CD14-positive monocyte (primary cell): ENCODE measurements at regions of chr1 and their contacts with region 1.

Region 1: GRCh38 chr1:96355521-96355920 is 366.1 kb upstream of the PTBP2 start:
- DNase-seq: no peak
- H3K4me3 ChIP-seq: no peak overlapping the region
- H3K4me3 Mint-ChIP-seq: no peak overlapping the region
- H3K27ac ChIP-seq: no peak overlapping the region
- H3K27ac Mint-ChIP-seq: no peak overlapping the region
- H3K4me1 ChIP-seq: peaks cover 2 to 9% of the 10 kb centered on the region in 2 donors
- H3K4me1 Mint-ChIP-seq: peaks cover 5% of the 10 kb centered on the region
- H3K27me3 ChIP-seq: no peaks in the 10 kb centered on the region
- H3K27me3 Mint-ChIP-seq: peaks cover under 1 to 10% (median 1%) of the 10 kb centered on the region in 3 donors
- CTCF ChIP-seq: no peak

Region 2: GRCh38 chr1:95723346-95723745 is 632.2 kb before region 1 on chr1:
- intact Hi-C with region 1: no loop called
- DNase-seq: no peak
- H3K4me3 ChIP-seq: no peak overlapping the region
- H3K4me3 Mint-ChIP-seq: no peak overlapping the region
- H3K27ac ChIP-seq: no peak overlapping the region
- H3K27ac Mint-ChIP-seq: no peak overlapping the region
- H3K4me1 ChIP-seq: no peaks in the 10 kb centered on the region
- H3K4me1 Mint-ChIP-seq: no peaks in the 10 kb centered on the region
- H3K27me3 ChIP-seq: no peaks in the 10 kb centered on the region
- H3K27me3 Mint-ChIP-seq: no peaks in the 10 kb centered on the region
- CTCF ChIP-seq: no peak

Region 3: DNA sequence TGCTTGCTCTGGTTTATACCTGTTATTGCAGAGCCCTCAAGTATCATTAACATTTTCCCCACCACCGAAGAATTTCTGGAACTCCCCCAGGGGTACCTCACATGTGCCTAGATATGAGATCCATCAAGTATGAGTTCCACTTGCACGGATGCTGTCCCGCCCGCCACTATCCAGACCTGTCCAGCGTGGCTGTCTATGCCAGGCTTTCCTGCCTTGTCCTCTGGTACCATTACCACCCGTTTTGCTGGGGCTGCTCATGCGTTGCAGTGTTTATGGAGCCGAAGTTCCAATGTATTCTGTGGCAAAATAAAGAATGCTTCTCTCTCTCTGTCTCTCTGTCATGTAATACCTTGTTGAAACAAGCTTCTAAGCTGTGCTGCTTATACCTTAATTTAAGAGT is 177.5 kb before region 1 on chr1:
- intact Hi-C with region 1: no loop called
- DNase-seq: no peak
- H3K4me3 ChIP-seq: no peak overlapping the region
- H3K4me3 Mint-ChIP-seq: no peak overlapping the region
- H3K27ac ChIP-seq: no peak overlapping the region
- H3K27ac Mint-ChIP-seq: no peak overlapping the region
- H3K4me1 ChIP-seq: no peaks in the 10 kb centered on the region
- H3K4me1 Mint-ChIP-seq: no peaks in the 10 kb centered on the region
- H3K27me3 ChIP-seq: no peaks in the 10 kb centered on the region
- H3K27me3 Mint-ChIP-seq: peaks cover 0 to 1% (median 0%) of the 10 kb centered on the region in 3 donors
- CTCF ChIP-seq: no peak

Region 4: DNA sequence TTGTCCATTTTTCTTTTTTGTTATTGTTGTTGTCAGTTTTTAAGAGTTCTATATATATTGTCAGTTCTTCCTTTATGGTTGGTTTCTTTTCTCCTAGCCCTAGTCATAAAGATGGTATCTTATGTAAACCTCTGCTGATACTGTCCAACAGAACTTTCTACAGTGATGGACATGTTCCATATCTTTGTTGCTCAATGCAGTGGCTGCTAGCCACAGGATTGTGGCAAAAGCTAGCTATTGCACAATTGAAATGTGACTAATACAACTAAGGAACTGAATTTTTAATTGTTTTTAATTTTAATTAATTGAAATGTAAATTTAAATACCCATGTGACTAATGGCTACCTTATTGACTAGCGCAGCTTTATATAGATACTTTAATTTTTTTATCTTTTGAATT is 45.7 kb before region 1 on chr1:
- intact Hi-C with region 1: loop called in 1 of 2 experiments (anchors 10 kb)
- DNase-seq: peak; percentile 55 to 80 (median 78)
- H3K4me3 ChIP-seq: no peak overlapping the region
- H3K4me3 Mint-ChIP-seq: no peak overlapping the region
- H3K27ac ChIP-seq: no peak overlapping the region
- H3K27ac Mint-ChIP-seq: peak overlapping the region in 4 of 7 donors; percentile 50 to 79 (median 58)
- H3K4me1 ChIP-seq: peaks cover 13 to 26% of the 10 kb centered on the region in 2 donors
- H3K4me1 Mint-ChIP-seq: peaks cover 19% of the 10 kb centered on the region
- H3K27me3 ChIP-seq: no peaks in the 10 kb centered on the region
- H3K27me3 Mint-ChIP-seq: peaks cover 0 to 3% (median 0%) of the 10 kb centered on the region in 3 donors
- CTCF ChIP-seq: no peak

Region 5: GRCh38 chr1:96340686-96341085 is 14.8 kb before region 1 on chr1:
- intact Hi-C with region 1: no loop called
- DNase-seq: peak in 1 of 3 donors; percentile 11
- H3K4me3 ChIP-seq: no peak overlapping the region
- H3K4me3 Mint-ChIP-seq: no peak overlapping the region
- H3K27ac ChIP-seq: no peak overlapping the region
- H3K27ac Mint-ChIP-seq: no peak overlapping the region
- H3K4me1 ChIP-seq: no peaks in the 10 kb centered on the region
- H3K4me1 Mint-ChIP-seq: no peaks in the 10 kb centered on the region
- H3K27me3 ChIP-seq: no peaks in the 10 kb centered on the region
- H3K27me3 Mint-ChIP-seq: peaks cover 0 to 2% (median 0%) of the 10 kb centered on the region in 3 donors
- CTCF ChIP-seq: no peak